PC-3 (cell line): ENCODE measurements at regions of chr1 and their contacts with region 1.

Region 1: DNA sequence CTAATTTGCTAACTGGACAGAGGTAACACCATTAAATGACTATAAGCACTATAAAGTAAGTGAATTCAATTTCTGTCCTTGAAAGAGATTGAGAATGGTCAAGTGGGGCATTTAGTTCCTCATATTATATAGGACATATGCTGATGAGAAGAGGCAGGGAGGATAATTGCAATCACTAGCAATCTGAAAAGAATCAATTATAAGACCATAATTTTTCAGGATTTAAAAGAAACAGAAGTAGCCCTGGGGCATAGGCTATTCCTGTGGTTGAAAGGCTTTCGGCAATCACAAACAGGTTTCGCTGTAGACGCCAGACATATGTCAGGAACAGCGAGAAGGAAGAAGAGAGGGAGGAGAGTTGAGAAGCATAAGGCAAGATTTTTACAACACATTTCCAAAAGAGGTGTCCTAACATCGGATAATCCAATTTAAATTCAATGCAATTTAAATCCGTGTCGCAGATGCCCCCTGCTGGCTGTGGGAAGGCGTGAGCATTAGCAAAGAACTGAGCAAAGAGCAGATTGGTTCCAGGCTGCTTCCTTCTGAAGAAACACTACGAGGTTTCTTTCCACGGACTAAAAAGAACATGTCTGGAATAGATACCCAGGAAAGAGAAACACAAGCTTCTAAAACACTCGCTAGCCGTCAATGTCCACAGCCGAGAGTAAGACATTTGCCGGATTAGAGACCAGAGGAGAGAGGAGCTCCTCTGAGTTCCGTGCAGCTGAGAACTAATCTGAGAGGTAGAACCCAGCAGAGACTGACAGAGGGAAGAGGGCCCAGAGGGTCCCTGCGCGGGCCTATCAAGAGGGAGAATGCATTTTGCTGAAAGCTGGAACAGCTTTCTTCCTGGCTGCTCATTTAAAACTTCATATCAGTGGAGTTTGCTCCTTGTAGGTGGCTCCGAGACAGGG is 27.9 kb downstream of the RGS5 start:
- DNase-seq: peak; percentile 85
- ATAC-seq: peak; percentile 50
- H3K4me3 ChIP-seq: peak overlapping the region; percentile 55; the same call in 1 of the 2 replicates
- H3K27ac ChIP-seq: 0 out of 2 replicates have a peak overlapping the region, but pooled peaks have one; percentile 1
- H3K4me1 ChIP-seq: peaks cover 46% of the 10 kb centered on the region
- H3K27me3 ChIP-seq: no peaks in the 10 kb centered on the region
- CTCF ChIP-seq: peak; percentile 99

Region 2: DNA sequence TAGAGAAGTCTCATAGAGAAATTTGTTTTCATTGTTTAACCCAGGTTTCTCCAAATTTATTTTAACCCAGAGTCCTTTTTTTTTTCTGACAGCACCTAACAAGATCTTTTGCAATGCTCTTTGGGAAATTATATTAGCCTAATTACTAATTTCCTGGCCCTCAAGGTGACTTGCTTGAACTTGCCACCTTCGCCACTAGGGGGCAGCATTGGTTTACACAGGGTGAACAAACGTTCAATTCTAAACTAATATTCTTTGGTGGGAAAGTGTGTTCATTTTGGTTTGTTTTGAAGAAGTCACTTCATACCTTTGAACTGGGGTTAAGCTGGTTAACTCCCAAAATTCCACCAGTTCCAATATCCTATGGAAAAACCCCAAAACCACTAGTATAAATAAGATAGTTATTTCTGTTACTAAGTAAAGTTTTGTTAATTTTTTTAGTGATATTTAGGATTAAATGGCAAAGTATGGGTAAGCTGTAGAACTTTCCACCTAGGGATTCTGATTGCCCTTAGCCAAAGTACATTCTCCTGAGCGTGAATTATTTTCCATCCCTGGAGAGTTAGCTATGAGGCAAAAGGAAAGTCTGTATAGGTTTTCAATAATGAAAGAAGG is 326.8 kb before region 1 on chr1:
- CTCF ChIA-PET with region 1: no interaction called
- POLR2A ChIA-PET with region 1: no interaction called
- intact Hi-C with region 1: loop called (anchors 1 kb)
- DNase-seq: peak; percentile 90
- ATAC-seq: peak; percentile 48
- H3K4me3 ChIP-seq: no peak overlapping the region
- H3K27ac ChIP-seq: no peak overlapping the region
- H3K4me1 ChIP-seq: peaks cover 15% of the 10 kb centered on the region
- H3K27me3 ChIP-seq: no peaks in the 10 kb centered on the region
- CTCF ChIP-seq: peak; percentile 99

Region 3: GRCh38 chr1:162854245-162854882 is 320.4 kb before region 1 on chr1:
- CTCF ChIA-PET with region 1: no interaction called
- POLR2A ChIA-PET with region 1: no interaction called
- intact Hi-C with region 1: loop called (anchors 1 kb)
- DNase-seq: peak; percentile 93
- ATAC-seq: peak; percentile 52
- H3K4me3 ChIP-seq: no peak overlapping the region
- H3K27ac ChIP-seq: peak overlapping the region; percentile 81
- H3K4me1 ChIP-seq: peaks cover 49% of the 10 kb centered on the region
- H3K27me3 ChIP-seq: no peaks in the 10 kb centered on the region
- CTCF ChIP-seq: peak; percentile 97

Region 4: DNA sequence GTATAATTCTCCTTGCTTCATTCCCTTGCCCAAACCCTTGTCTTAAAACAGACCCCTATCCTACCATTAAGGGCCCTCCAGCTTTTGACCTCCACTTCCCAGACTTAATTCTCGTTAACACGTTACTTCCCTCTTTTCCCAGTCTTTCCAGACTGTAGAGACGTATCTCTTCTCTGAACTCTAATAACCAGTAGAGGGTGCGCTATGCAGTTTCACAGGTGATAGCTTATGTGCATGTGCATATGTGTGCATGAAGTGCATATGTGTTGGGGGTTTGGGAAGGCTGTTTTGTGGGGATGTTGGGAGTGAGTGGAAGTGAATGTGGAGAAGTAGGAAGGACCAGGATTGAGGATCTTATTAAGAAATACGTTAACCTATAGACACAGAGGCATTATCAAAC is 235.7 kb before region 1 on chr1:
- CTCF ChIA-PET with region 1: no interaction called
- POLR2A ChIA-PET with region 1: no interaction called
- intact Hi-C with region 1: loop called (anchors 2 kb)
- DNase-seq: peak; percentile 65
- ATAC-seq: peak; percentile 79
- H3K4me3 ChIP-seq: no peak overlapping the region
- H3K27ac ChIP-seq: no peak overlapping the region
- H3K4me1 ChIP-seq: no peaks in the 10 kb centered on the region
- H3K27me3 ChIP-seq: no peaks in the 10 kb centered on the region
- CTCF ChIP-seq: peak; percentile 81

Region 5: GRCh38 chr1:163071405-163072255 is 103.2 kb before region 1 on chr1:
- CTCF ChIA-PET with region 1: interaction called, 12 read pairs
- POLR2A ChIA-PET with region 1: no interaction called
- intact Hi-C with region 1: loop called (anchors 1 kb)
- DNase-seq: peak; percentile 97
- ATAC-seq: peak; percentile 68
- H3K4me3 ChIP-seq: no peak overlapping the region
- H3K27ac ChIP-seq: peak overlapping the region; percentile 79
- H3K4me1 ChIP-seq: peaks cover 30% of the 10 kb centered on the region
- H3K27me3 ChIP-seq: no peaks in the 10 kb centered on the region
- CTCF ChIP-seq: peak; percentile 87

Region 6: DNA sequence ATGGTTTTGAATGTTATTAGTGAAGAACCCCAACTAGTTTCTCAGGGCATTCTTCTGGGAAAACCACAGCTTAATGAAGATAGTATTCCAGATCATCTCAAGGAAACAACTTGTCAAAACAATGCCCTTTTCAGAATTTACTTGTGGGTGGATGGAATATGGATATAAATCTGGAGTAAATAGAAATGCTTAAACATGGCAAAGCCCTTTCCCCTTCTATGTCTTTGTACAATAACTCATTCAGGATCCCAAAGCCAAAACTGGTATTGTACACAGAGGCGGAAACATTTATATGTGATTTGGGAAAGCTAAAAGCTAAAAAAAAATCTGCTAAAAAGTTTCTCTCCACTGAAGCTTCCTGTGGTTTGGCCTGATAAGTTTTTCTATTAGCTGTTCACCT is 83.4 kb after region 1 on chr1:
- CTCF ChIA-PET with region 1: no interaction called
- POLR2A ChIA-PET with region 1: no interaction called
- intact Hi-C with region 1: loop called (anchors 5 kb)
- DNase-seq: peak; percentile 71
- ATAC-seq: peak; percentile 96
- H3K4me3 ChIP-seq: no peak overlapping the region
- H3K27ac ChIP-seq: peak overlapping the region; percentile 69
- H3K4me1 ChIP-seq: peaks cover 15% of the 10 kb centered on the region
- H3K27me3 ChIP-seq: no peaks in the 10 kb centered on the region
- CTCF ChIP-seq: no peak

Region 7: GRCh38 chr1:163315773-163316374 is 141.1 kb after region 1 on chr1:
- CTCF ChIA-PET with region 1: interaction called, 5 read pairs
- POLR2A ChIA-PET with region 1: no interaction called
- intact Hi-C with region 1: loop called (anchors 1 kb)
- DNase-seq: peak; percentile 68
- ATAC-seq: peak; percentile 37; the same call in 1 of the 2 replicates
- H3K4me3 ChIP-seq: no peak overlapping the region
- H3K27ac ChIP-seq: no peak overlapping the region
- H3K4me1 ChIP-seq: peaks cover 8% of the 10 kb centered on the region; the same call in 1 of the 2 replicates
- H3K27me3 ChIP-seq: no peaks in the 10 kb centered on the region
- CTCF ChIP-seq: peak; percentile 95